Activated CD4-positive, alpha-beta memory T cell treated with anti-CD3 and anti-CD28 coated beads for 36 hours (primary cell): ENCODE measurements at regions of chr3 and their contacts with region 1.

Region 1: DNA sequence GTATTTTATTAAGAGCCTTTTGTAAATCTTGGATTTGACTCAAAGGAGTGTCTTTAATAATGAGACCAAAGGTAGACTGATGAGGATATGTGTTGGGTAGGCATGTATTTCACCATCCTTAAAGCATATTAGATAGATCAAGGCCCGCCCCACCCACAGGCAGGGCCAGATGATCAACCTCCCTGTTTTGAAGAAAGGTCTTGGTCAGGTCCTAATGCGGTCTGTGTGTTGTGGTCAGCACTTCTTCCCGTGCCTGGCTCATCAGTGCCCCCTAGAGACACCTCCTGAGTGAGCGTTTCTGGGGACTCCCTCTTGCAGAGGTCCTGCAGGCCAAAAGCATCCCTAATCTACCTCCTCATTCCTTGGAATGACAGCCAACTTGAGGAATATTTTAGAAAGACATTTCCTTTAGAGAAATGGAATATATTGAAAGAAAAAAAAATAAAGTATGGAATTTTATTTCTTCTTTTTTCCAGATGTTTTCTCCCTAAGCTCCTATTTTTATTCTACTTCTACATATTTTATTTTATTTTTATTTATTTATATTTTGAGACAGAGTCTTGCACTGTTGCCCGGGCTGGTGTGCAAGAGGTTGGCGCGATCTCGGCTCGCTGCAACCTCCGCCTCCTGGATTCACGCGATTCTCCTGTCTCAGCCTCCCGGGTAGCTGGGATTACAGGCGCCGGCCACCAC is 6.0 kb downstream of the TM4SF4 start:
- DNase-seq: peak; percentile 66
- H3K4me3 Mint-ChIP-seq: no peak overlapping the region
- H3K27ac Mint-ChIP-seq: no peak overlapping the region
- H3K4me1 Mint-ChIP-seq: no peaks in the 10 kb centered on the region
- H3K27me3 Mint-ChIP-seq: no peaks in the 10 kb centered on the region

Region 2: DNA sequence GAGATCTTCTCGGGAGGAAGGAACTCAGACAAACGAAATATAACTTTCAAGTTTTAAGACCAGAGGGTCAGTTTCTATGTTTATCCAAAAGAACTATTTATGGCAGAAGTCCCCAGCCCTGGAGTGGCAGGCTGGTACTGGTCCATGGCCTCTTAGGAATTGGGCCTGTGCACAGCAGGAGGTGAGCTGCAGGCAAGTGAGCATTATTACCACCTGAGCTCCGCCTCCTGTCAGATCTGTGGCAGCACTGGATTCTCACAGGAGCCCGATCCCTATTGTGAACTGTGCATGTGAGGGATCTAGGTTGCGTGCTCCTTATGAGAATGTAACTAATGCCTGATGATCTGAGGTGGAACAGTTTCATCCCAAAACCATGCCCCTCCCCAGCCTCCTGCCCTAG is 365.4 kb before region 1 on chr3:
- CTCF ChIA-PET with region 1: no interaction called
- POLR2A ChIA-PET with region 1: no interaction called
- intact Hi-C with region 1: loop called (anchors 5 kb)
- DNase-seq: no peak
- H3K4me3 Mint-ChIP-seq: no peak overlapping the region
- H3K27ac Mint-ChIP-seq: no peak overlapping the region
- H3K4me1 Mint-ChIP-seq: no peaks in the 10 kb centered on the region
- H3K27me3 Mint-ChIP-seq: no peaks in the 10 kb centered on the region

Region 3: GRCh38 chr3:149273096-149273751 is 207.2 kb before region 1 on chr3:
- CTCF ChIA-PET with region 1: no interaction called
- POLR2A ChIA-PET with region 1: no interaction called
- intact Hi-C with region 1: no loop called
- DNase-seq: peak; percentile 26
- H3K4me3 Mint-ChIP-seq: no peak overlapping the region
- H3K27ac Mint-ChIP-seq: no peak overlapping the region
- H3K4me1 Mint-ChIP-seq: peaks cover 9% of the 10 kb centered on the region
- H3K27me3 Mint-ChIP-seq: no peaks in the 10 kb centered on the region

Region 4: DNA sequence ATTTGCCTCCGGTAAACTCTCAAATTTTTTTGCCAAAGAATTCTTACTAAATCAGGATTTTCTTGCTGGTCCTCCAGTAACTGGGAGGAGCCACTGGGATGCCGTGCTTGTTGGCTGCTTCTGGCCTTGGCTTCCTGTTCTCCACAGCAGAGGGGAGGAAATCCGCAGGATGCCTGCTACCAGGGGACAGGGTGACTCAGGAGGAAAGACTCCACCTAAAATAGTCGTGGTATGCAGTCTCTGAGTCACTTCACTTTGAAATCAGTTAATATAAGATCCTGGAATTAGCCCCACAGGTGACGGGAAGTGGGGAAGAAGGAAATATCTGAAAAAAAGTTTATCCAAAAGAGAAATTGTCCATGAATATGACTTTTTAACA is 140.6 kb before region 1 on chr3:
- CTCF ChIA-PET with region 1: no interaction called
- POLR2A ChIA-PET with region 1: no interaction called
- intact Hi-C with region 1: no loop called
- DNase-seq: no peak
- H3K4me3 Mint-ChIP-seq: no peak overlapping the region
- H3K27ac Mint-ChIP-seq: no peak overlapping the region
- H3K4me1 Mint-ChIP-seq: no peaks in the 10 kb centered on the region
- H3K27me3 Mint-ChIP-seq: peaks cover 8% of the 10 kb centered on the region

Region 5: GRCh38 chr3:149352556-149352955 is 127.9 kb before region 1 on chr3:
- CTCF ChIA-PET with region 1: interaction called, 4 read pairs
- POLR2A ChIA-PET with region 1: no interaction called
- intact Hi-C with region 1: loop called (anchors 1 kb)
- DNase-seq: peak; percentile 33
- H3K4me3 Mint-ChIP-seq: no peak overlapping the region
- H3K27ac Mint-ChIP-seq: no peak overlapping the region
- H3K4me1 Mint-ChIP-seq: no peaks in the 10 kb centered on the region
- H3K27me3 Mint-ChIP-seq: peaks cover 10% of the 10 kb centered on the region

Region 6: GRCh38 chr3:149393345-149394160 is 86.9 kb before region 1 on chr3:
- CTCF ChIA-PET with region 1: no interaction called
- POLR2A ChIA-PET with region 1: no interaction called
- intact Hi-C with region 1: loop called (anchors 2 kb)
- DNase-seq: peak; percentile 50
- H3K4me3 Mint-ChIP-seq: no peak overlapping the region
- H3K27ac Mint-ChIP-seq: no peak overlapping the region
- H3K4me1 Mint-ChIP-seq: no peaks in the 10 kb centered on the region
- H3K27me3 Mint-ChIP-seq: no peaks in the 10 kb centered on the region